ENCODE measurements at regions of chr2 and their contacts with region 1.

Region 1: GRCh38 chr2:37832590-37833197 is 92.4 kb upstream of the RMDN2 start:
- DNase-seq: peak; percentile 84 to 88
- ATAC-seq: peak; percentile 99
- H3K4me3 ChIP-seq: no peak overlapping the region
- H3K27ac ChIP-seq: peak overlapping the region; percentile 41 to 43; a peak in 2 of 6 replicates
- H3K4me1 ChIP-seq: peaks cover 20% of the 10 kb centered on the region
- CTCF ChIP-seq: peak; percentile 99
- EP300 ChIP-seq: no peak
- POLR2A ChIP-seq: no peak
- RAD21 ChIP-seq: peak; percentile 100

Region 2: DNA sequence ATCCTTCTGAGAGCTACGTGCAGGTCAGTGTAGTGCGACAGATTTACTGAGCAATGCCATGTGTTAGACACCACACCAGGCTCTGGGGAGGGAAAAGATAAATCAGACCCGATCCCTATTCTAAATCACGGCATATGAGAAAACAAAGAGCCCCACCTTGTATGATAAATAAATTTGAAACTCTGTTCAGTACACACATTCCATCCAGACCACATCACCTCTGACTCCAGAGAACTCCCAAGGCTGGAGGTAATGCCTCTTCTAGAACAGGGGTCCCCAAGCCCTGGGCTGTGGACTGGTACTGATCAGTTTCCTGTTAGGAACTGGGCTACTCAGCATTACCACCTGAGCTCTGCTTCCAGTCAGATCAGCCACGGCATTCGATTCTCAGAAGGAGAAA is 411.0 kb before region 1 on chr2:
- CTCF ChIA-PET with region 1: interaction called, 433 read pairs
- POLR2A ChIA-PET with region 1: no interaction called
- DNase-seq: no peak
- ATAC-seq: no peak
- H3K4me3 ChIP-seq: no peak overlapping the region
- H3K27ac ChIP-seq: no peak overlapping the region
- H3K4me1 ChIP-seq: peaks cover 6% of the 10 kb centered on the region; the same call in 2 of the 3 replicates
- CTCF ChIP-seq: no peak
- EP300 ChIP-seq: no peak
- POLR2A ChIP-seq: no peak
- RAD21 ChIP-seq: no peak

Region 3: DNA sequence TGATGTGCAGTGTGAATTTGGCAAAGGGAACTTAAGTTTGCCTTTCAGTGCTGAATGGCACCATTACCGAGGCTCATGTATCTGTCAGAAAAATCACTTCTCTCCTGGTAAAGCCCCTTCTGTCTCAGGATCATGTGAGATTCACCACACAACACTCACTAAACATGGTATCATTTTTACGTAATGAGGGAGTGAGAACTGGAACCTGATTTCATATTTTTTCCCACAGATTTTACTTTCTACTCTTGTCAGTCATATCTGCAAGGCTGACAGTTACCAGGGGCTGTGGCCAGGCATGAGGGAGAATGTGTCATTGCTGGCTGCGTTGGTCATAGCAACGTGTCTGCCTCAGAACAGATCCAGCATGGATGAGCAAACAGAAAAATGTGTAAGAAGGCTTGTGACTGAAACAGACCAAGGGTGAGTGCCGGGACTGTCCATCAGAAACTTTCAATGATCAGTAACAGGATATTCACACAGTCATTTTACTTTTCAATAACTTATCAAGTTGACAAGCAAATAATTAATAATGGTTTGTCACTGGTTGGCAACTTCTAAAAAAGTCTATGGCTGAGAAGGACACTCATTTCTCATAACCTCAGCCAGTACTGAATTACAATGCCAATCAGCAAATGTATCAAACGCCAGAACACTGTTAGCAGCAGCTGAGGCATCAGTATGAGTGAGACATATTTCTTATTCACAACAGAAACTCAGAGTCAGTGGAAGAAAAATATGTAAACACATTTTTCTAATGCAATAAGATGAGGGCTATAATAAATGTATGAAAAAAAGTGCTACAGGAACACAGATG is 261.7 kb before region 1 on chr2:
- CTCF ChIA-PET with region 1: interaction called, 15 read pairs
- POLR2A ChIA-PET with region 1: no interaction called
- DNase-seq: peak in 1 of 2 experiments; percentile 49
- ATAC-seq: peak; percentile 85 to 91
- H3K4me3 ChIP-seq: no peak overlapping the region
- H3K27ac ChIP-seq: peak overlapping the region; percentile 12 to 32; a peak in 3 of 6 replicates
- H3K4me1 ChIP-seq: peaks cover 34% of the 10 kb centered on the region
- CTCF ChIP-seq: no peak
- EP300 ChIP-seq: no peak
- POLR2A ChIP-seq: no peak
- RAD21 ChIP-seq: no peak

Region 4: GRCh38 chr2:37654932-37655331 is 177.8 kb before region 1 on chr2:
- CTCF ChIA-PET with region 1: interaction called, 21 read pairs
- POLR2A ChIA-PET with region 1: no interaction called
- DNase-seq: no peak
- ATAC-seq: no peak
- H3K4me3 ChIP-seq: no peak overlapping the region
- H3K27ac ChIP-seq: peak overlapping the region; percentile 11 to 85; a peak in 4 of 6 replicates
- H3K4me1 ChIP-seq: peaks cover 94% of the 10 kb centered on the region
- CTCF ChIP-seq: no peak
- EP300 ChIP-seq: no peak
- POLR2A ChIP-seq: no peak
- RAD21 ChIP-seq: no peak

Region 5: GRCh38 chr2:37795938-37796337 is 36.8 kb before region 1 on chr2:
- CTCF ChIA-PET with region 1: interaction called, 13 read pairs
- POLR2A ChIA-PET with region 1: no interaction called
- DNase-seq: no peak
- ATAC-seq: no peak
- H3K4me3 ChIP-seq: no peak overlapping the region
- H3K27ac ChIP-seq: peak overlapping the region; percentile 29 to 38; a peak in 5 of 6 replicates
- H3K4me1 ChIP-seq: peaks cover 23% of the 10 kb centered on the region
- CTCF ChIP-seq: no peak
- EP300 ChIP-seq: no peak
- POLR2A ChIP-seq: no peak
- RAD21 ChIP-seq: no peak

Region 6: GRCh38 chr2:37851828-37852584 is 19.3 kb after region 1 on chr2:
- CTCF ChIA-PET with region 1: interaction called, 18 read pairs
- POLR2A ChIA-PET with region 1: interaction called, 3 read pairs
- DNase-seq: no peak
- ATAC-seq: no peak
- H3K4me3 ChIP-seq: no peak overlapping the region
- H3K27ac ChIP-seq: no peak overlapping the region
- H3K4me1 ChIP-seq: no peaks in the 10 kb centered on the region
- CTCF ChIP-seq: no peak
- EP300 ChIP-seq: no peak
- POLR2A ChIP-seq: no peak
- RAD21 ChIP-seq: no peak

Region 7: DNA sequence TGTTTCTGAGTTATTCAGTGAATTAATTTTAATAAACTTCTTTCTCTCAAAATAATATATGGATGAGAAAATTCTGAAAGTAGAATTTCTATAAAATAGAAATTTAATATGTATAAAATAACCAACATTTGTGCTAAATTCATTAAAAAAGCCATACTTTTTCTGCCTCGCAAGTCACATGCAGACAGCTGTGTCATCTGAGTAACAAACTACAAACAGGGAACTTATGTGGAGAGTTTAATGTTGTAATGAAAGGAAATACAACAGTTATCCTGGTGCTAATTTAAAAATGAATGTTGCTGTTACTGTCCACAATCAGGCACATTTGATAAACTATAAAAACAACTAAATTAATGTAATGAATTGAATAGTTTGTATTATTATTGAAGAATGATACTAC is 114.6 kb after region 1 on chr2:
- CTCF ChIA-PET with region 1: no interaction called
- POLR2A ChIA-PET with region 1: no interaction called
- DNase-seq: no peak
- ATAC-seq: no peak
- H3K4me3 ChIP-seq: no peak overlapping the region
- H3K27ac ChIP-seq: no peak overlapping the region
- H3K4me1 ChIP-seq: no peaks in the 10 kb centered on the region
- CTCF ChIP-seq: no peak
- EP300 ChIP-seq: no peak
- POLR2A ChIP-seq: no peak
- RAD21 ChIP-seq: no peak